Activated CD8-positive, alpha-beta T cell treated with anti-CD3 and anti-CD28 coated beads for 36 hours (primary cell): ENCODE measurements at regions of chr3 and their contacts with region 1.

Region 1: DNA sequence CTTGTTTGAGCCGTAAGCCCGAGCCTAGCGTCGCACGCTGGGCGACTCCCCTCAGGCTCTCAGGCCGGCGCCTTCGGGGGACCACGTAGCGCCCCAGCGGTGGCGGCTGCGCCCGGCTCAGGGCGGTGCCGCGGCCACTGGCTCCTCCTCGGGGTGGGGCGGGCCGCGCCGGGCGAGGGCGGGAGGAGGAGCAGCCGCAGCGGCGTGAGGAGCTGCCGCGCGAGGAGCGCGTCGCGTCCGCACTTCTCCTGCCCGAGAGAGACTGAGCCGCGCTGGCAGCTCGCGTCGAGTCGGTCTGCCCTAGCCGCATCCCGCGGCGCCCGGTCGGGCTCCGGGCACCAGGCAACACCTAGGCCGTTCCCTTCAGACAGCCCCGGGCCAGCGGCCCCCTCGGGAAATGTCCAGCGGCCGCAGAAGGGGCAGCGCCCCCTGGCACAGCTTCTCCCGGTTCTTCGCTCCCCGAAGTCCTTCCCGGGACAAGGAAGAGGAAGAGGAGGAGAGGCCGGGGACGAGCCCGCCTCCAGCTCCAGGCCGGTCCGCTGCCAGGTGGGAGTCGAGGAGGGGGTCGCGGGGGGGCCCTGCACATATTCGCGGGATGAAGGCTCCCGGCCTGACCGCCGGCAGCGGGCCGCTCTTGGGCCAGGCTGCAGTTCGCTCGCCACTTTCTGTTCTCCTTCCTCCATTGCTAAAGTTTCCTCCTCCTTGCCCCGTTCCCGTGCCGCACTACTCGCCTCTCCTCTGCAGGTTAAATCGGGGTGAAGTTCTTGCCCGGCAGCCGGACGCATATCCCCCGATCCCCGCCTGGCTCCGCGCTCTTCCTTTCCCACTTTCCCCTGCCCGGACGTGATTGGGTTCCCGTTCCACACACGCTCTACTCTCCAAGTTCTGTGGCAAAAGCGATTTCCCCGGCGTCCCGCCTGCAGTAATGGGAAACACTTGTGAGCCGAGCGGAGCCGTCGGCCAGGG is at the start of gene CRYBG3:
- DNase-seq: peak; percentile 83
- ATAC-seq: peak; percentile 99
- H3K4me3 Mint-ChIP-seq: peak within 1 kb of the TSS; percentile 91
- H3K27ac Mint-ChIP-seq: peak within 1 kb of the TSS; percentile 78
- H3K4me1 Mint-ChIP-seq: peaks cover 17% of the 10 kb centered on the region
- H3K27me3 Mint-ChIP-seq: peaks cover 20% of the 10 kb centered on the region
- CTCF ChIP-seq: no peak
- total RNA-seq, gene CRYBG3: 4.3 to 4.9 TPM

Region 2: DNA sequence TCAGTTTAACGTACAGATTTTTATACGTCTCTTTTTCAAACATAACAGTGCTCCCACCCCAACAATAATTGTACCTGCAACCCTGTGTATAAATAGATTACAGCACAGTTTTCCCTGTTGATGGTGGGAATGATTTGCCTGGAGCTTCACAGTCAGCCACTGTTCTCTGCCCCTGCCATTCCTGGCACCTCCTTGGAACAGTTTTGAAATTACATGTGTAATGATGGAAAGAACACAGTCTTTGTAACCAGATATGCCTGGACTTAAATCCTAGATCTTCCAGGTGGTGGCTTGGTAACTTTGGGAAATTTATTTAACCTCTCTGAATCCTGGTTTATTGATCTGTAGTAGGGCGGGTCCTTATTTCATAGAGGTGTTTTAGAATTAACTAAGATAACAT is 26.7 kb after region 1 on chr3:
- CTCF ChIA-PET with region 1: no interaction called
- POLR2A ChIA-PET with region 1: no interaction called
- intact Hi-C with region 1: no loop called
- DNase-seq: no peak
- ATAC-seq: no peak
- H3K4me3 Mint-ChIP-seq: no peak overlapping the region
- H3K27ac Mint-ChIP-seq: no peak overlapping the region
- H3K4me1 Mint-ChIP-seq: no peaks in the 10 kb centered on the region
- H3K27me3 Mint-ChIP-seq: no peaks in the 10 kb centered on the region
- CTCF ChIP-seq: no peak

Region 3: DNA sequence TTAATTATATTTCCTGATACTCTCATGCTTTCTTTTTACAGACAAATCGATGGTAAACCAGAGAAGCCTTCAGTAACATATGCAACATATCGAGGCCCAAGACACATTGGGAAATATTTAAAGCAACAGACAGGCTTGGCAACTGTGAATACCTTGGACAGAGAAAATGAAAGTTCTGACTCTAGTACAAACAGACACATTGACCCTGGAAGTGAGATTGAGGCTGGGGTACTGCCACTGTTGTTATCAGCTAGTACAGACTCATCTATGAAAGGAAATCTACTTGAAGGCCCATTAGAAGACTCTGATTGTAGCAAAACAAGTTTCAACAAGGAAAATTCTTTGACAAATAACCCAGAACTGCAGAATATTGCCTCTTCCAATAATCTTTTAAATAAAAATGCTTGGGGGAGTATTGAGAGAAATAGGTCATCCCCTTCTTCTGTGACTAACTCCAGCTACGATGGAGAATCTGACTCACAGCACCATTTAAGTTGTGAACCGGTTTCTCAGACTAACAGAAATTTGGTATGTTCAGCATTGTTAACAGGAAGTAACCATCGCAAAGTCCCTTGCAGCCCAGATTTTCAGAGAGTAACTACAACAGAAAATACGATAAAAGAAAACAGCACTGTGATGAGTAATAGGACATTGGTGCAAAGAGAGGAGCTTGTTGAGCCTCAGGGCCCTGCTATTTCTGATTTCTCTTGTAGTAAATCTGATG is 49.9 kb after region 1 on chr3:
- CTCF ChIA-PET with region 1: interaction called, 5 read pairs
- POLR2A ChIA-PET with region 1: interaction called, 4 read pairs
- intact Hi-C with region 1: loop called (anchors 5 kb)
- DNase-seq: peak; percentile 62
- ATAC-seq: peak; percentile 90
- H3K4me3 Mint-ChIP-seq: peak overlapping the region; percentile 38
- H3K27ac Mint-ChIP-seq: peak overlapping the region; percentile 85
- H3K4me1 Mint-ChIP-seq: peaks cover 18% of the 10 kb centered on the region
- H3K27me3 Mint-ChIP-seq: no peaks in the 10 kb centered on the region
- CTCF ChIP-seq: no peak

Region 4: DNA sequence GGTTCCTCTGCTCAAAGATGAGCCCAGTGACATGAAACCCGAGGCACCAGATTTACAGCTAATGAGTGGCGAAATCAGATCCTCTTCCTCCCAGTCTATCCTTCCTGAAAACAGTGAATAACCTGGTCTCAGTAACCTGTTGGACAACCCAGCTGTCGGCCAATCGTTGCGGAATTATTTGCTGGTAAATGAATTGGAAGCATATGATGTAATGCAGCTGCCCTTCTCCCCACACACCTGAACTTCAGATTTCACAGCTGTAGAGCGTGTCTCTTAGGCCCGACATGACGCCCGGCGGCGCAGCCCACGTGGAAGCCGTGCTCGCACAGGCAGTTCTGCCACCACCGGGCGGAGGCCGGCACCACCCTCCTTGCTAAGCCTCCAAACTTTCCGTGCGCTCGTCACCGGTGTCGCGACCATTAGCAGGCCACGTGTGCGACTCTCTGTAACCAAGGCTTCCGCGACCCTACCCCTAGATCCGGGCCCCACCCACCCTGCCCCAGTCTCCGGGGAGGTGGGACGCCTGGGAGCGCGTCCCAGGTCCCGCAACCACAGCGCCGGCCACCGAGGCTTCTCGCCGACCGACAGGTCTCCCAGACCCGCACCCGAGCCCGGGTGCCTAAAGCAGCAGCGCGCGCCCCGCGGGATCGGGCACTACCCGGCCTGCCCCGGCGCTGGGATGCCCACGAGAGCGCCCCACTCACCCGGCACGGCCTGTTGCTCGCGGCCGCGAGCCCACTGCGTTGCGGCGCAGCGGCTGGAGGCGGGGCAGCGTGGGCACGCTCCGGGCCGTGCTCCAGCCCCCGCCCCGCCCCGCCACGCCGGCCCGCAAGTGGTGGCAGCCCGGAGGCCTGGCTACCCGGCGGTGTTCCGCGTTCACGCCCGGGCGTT is 149.8 kb after region 1 on chr3 and contains the start of gene RIOX2:
- CTCF ChIA-PET with region 1: interaction called, 12 read pairs
- POLR2A ChIA-PET with region 1: interaction called, 5 read pairs
- intact Hi-C with region 1: no loop called
- DNase-seq: peak; percentile 89
- ATAC-seq: peak; percentile 90
- H3K4me3 Mint-ChIP-seq: peak within 1 kb of the TSS; percentile 89
- H3K27ac Mint-ChIP-seq: peak within 1 kb of the TSS; percentile 96
- H3K4me1 Mint-ChIP-seq: peaks cover 53% of the 10 kb centered on the region
- H3K27me3 Mint-ChIP-seq: no peaks in the 10 kb centered on the region
- CTCF ChIP-seq: no peak
- total RNA-seq, gene RIOX2: 41.2 to 43.3 TPM